Activated CD4-positive, alpha-beta T cell treated with anti-CD3 and anti-CD28 coated beads, Interleukin-2, amount 10 ng/mL, durations not matched to agents 24 days and 14 days (primary cell): ENCODE measurements at regions of chr3 and their contacts with region 1.

Region 1: DNA sequence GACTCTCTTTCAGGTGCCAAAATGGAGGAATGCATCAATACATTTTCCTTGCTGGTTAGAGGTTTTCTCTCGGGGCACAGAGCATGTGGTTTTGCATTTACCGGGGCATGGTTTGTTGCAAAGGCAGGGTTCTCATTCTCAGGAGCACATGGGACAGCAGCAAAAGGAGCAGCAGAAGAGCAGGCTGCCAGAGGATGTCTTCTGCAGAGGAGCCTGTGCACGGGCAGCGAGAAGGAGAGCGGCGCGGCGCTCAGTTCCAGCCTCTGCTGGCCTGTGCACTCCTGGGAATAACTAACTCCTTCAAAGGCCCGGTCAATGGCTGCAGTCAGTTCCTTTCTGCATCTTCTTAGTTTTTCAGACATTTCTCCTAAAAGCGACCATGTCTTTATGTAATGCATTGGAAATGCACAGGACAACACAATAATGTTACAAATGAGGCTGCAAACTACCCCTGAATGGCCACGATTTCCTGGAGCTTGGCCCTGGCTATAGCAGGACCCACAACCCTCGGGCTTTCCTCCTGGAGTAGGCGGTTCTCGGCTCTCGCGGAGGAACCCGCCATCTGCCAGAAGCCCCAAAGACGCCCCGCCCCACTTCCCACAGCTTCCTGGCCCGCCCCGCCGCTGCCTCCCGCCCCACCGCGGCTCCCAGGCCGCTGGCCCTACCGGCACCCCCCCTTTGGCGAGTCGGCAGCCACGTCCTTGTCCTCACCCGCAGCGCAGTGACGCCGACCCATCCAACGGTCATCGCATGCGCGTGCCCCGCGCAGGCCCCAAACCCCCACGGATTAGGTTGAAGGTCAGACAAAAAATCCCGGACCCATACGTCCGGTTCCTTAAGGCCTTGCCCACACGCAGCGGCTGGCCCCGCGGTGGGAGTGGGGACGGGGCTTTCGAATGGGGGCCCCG is at the start of gene C3orf62:
- DNase-seq: peak; percentile 94
- H3K4me3 Mint-ChIP-seq: peak within 1 kb of the TSS; percentile 78
- H3K27ac Mint-ChIP-seq: peak within 1 kb of the TSS; percentile 93
- H3K4me1 Mint-ChIP-seq: peaks cover 25% of the 10 kb centered on the region
- H3K27me3 Mint-ChIP-seq: no peaks in the 10 kb centered on the region
- total RNA-seq, gene C3orf62: 8.0 and 9.6 TPM in 2 replicates

Region 2: GRCh38 chr3:49171119-49171774 is 105.5 kb before region 1 on chr3 and contains the start of gene KLHDC8B:
- intact Hi-C with region 1: loop called (anchors 1 kb)
- DNase-seq: peak; percentile 95
- H3K4me3 Mint-ChIP-seq: peak within 1 kb of the TSS; percentile 85
- H3K27ac Mint-ChIP-seq: peak within 1 kb of the TSS; percentile 52
- H3K4me1 Mint-ChIP-seq: peaks cover 11% of the 10 kb centered on the region
- H3K27me3 Mint-ChIP-seq: no peaks in the 10 kb centered on the region
- total RNA-seq, gene KLHDC8B: 1.5 and 2.3 TPM in 2 replicates

Region 3: GRCh38 chr3:49295489-49296058 is 18.8 kb after region 1 on chr3:
- intact Hi-C with region 1: loop called (anchors 2 kb)
- DNase-seq: peak; percentile 78
- H3K4me3 Mint-ChIP-seq: no peak overlapping the region
- H3K27ac Mint-ChIP-seq: peak overlapping the region; percentile 15
- H3K4me1 Mint-ChIP-seq: no peaks in the 10 kb centered on the region
- H3K27me3 Mint-ChIP-seq: no peaks in the 10 kb centered on the region

Region 4: DNA sequence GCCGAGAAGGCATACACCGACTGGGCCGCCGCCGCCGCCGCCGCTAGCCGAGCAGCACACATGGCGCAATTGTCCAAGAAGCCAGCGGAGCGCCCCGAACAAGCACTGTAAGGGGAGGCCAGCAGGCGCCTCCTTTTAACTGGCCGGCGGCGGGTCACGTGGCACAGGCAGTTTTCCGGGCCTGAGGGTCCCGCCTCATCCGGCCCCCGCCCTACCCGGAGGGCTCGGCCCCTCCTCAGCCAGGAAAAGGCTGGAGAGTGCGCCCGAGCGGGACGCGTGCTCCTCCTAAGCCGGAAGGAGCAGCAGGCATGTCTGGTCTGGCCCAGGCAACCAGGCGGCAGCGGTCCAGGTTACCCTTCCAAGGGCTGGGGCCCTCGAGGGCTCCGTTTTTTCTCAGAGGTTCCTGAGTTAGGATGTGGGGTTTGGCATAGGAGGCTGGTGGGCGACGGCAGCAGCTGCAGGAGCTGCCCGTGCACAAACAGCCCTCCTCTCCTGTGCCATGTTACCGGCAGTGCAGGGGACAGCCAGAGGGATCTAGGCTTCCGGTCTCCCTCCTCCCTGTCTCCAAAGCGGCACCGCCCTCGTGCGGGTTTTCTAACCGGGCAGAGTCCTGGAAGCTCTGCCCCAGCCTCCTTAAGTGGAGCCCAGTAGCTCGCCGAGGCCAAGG is 81.6 kb after region 1 on chr3 and contains the start of gene GPX1:
- intact Hi-C with region 1: loop called (anchors 5 kb)
- DNase-seq: peak; percentile 96
- H3K4me3 Mint-ChIP-seq: peak within 1 kb of the TSS; percentile 95
- H3K27ac Mint-ChIP-seq: peak within 1 kb of the TSS; percentile 97
- H3K4me1 Mint-ChIP-seq: peaks cover 21% of the 10 kb centered on the region
- H3K27me3 Mint-ChIP-seq: no peaks in the 10 kb centered on the region
- total RNA-seq, gene GPX1: 190 and 200 TPM in 2 replicates